ENCODE measurements at regions of chr14 and their contacts with region 1.

Region 1: DNA sequence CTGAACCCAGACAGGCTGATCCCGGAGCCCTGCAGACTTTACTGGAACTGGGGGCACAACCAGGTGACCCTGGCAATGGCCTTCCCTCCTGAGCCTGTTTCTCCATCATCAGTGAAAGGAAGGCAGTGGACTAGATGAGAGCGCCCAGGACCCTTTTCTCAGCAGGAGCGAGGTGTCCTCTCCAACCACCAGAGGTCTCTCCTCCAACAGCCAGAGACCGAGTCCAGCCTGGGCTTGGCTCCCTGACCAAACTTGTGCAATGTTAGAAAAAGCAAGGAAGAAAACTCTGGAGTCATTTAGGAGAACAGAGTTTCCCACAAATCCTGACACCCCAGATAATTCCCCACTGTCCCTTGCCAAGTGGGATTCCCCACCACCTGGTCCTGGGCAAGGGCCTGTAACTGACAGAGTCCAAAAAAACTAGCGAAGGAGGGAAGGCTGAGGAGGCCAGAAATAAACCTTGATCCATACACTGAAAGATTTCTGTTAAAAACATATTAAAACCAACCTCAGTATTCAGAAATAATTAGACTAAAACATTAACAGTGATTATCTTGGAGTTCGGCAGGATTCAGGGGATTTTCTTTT is 9.0 kb downstream of the RPS6KL1 start:
- DNase-seq: peak; percentile 64 to 82
- ATAC-seq: peak; percentile 38 to 72 (median 64)
- H3K4me3 ChIP-seq: no peak overlapping the region
- H3K27ac ChIP-seq: peak overlapping the region in 8 of 10 donors; percentile 8 to 90 (median 56)
- H3K4me1 ChIP-seq: peaks cover 25 to 69% (median 49%) of the 10 kb centered on the region in 9 donors
- H3K27me3 ChIP-seq: no peaks in the 10 kb centered on the region
- CTCF ChIP-seq: peak; percentile 52 to 91 (median 81)

Region 2: DNA sequence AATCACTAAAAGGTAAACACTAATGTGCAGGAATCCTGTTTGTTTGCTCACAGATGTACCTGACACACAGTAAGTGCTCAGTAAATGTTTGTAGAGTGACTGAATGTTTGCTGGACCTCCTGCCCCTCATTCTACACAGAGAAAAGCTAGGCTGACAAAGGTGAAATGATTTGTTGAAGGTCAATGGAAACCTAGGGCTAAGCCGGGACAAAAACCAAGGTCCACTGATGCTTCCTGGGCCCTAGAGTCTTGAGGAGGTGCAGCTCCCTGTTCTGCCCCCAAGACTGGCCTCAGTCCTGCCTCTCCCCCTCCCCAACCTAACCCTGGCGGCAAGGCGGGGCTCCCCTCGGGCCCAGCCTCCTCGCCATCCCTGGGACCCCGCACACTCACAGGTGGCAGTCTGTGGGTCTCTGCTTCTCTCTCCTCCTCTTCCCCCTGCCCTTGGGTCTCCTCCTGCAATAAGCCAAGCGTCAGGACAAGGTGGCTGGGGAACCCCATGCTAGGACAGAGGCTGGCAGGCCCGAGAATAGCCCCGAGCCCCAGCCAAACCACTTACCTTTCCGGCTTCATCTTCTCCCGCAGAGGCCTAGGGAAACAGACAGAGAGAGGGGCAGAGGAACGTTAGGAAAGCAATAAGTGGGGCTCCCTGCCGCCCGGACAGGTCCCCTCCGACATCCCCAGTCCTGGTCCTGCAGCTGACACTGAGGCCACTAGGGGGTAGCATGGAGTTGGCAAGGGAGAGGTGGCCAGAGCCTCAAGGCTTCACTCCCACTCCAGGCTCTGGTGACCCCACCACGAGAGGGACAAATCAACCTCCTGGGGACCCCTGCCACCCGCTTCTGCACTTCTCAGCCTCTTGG is 32.0 kb after region 1 on chr14:
- intact Hi-C with region 1: loop called in 1 of 10 experiments (anchors 2 kb)
- DNase-seq: peak; percentile 76 to 83
- ATAC-seq: peak; percentile 74 to 86 (median 81)
- H3K4me3 ChIP-seq: peak overlapping the region in 3 of 10 donors; percentile 4 to 21 (median 17)
- H3K27ac ChIP-seq: peak overlapping the region in 7 of 10 donors; percentile 8 to 76 (median 54)
- H3K4me1 ChIP-seq: peaks cover 14 to 72% (median 44%) of the 10 kb centered on the region in 9 donors
- H3K27me3 ChIP-seq: peaks cover 0 to 4% (median 0%) of the 10 kb centered on the region in 7 donors
- CTCF ChIP-seq: peak; percentile 89 to 96 (median 95)